CD4-positive, alpha-beta T cell (primary cell): ENCODE measurements at regions of chr14 and their contacts with region 1.

Region 1: GRCh38 chr14:90331497-90332435 is at the start of gene NRDE2:
- DNase-seq: peak; percentile 81 to 99 (median 93)
- ATAC-seq: peak; percentile 95
- H3K4me3 ChIP-seq: peak within 1 kb of the TSS; percentile 83
- H3K4me3 Mint-ChIP-seq: peak within 1 kb of the TSS; percentile 93
- H3K27ac ChIP-seq: peak within 1 kb of the TSS; percentile 60 to 72
- H3K27ac Mint-ChIP-seq: peak within 1 kb of the TSS; percentile 93
- H3K4me1 ChIP-seq: peaks cover 13% of the 10 kb centered on the region
- H3K4me1 Mint-ChIP-seq: peaks cover 40% of the 10 kb centered on the region
- H3K27me3 ChIP-seq: no peaks in the 10 kb centered on the region
- H3K27me3 Mint-ChIP-seq: peaks cover 11% of the 10 kb centered on the region
- CTCF ChIP-seq: no peak
- total RNA-seq, gene NRDE2: 17.5 to 17.9 TPM

Region 2: DNA sequence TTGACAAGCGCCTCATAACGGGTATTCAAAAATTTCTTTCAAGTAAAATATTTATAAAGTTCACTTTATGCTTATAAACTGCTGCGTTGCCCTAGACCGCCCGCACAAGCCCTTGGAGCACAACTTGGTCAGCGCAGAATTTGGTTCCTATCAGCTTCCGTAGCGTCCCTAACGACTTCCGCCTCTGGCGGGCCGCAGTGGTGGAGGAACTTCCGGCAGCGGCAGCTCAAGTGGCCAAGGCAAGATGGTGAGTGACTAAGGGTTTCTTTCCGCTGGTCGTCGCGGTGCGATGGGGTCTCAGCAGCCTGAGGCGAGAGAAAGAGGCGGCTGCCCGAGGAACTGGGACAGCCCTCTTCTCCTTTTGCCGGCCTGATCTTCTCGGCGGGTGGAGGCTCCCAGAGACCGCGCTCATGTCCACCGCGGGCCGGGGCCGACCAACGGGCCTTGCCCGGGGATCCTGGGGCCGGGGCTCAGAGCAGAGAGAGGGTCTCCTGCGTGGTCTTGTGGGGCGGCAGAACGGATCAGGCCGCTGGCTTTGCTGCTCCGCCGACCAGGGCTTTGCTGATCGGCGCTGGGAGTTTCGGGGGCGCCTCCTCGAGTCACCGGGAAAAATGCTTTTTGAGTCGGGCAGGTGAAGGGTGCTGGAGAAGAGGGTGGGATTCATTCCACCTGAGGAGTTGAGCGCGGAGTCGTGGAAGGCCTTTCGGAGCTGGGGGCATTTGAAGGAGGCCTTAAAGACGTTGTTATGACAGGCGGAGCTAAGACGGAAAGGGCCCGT is 75.2 kb before region 1 on chr14 and contains the start of gene PSMC1:
- CTCF ChIA-PET with region 1: no interaction called
- POLR2A ChIA-PET with region 1: no interaction called
- intact Hi-C with region 1: loop called in 1 of 2 experiments (anchors 2 kb)
- DNase-seq: peak; percentile 79 to 93 (median 83)
- ATAC-seq: peak; percentile 94
- H3K4me3 ChIP-seq: peak within 1 kb of the TSS; percentile 79
- H3K4me3 Mint-ChIP-seq: peak within 1 kb of the TSS; percentile 99
- H3K27ac ChIP-seq: peak within 1 kb of the TSS; percentile 39 to 79
- H3K27ac Mint-ChIP-seq: peak within 1 kb of the TSS; percentile 91
- H3K4me1 ChIP-seq: peaks cover 12% of the 10 kb centered on the region
- H3K4me1 Mint-ChIP-seq: peaks cover 34% of the 10 kb centered on the region
- H3K27me3 ChIP-seq: peaks cover 0 to 4% of the 10 kb centered on the region in 2 experiments
- H3K27me3 Mint-ChIP-seq: peaks cover 16% of the 10 kb centered on the region
- CTCF ChIP-seq: no peak
- total RNA-seq, gene PSMC1: 75.8 to 80.3 TPM

Region 3: DNA sequence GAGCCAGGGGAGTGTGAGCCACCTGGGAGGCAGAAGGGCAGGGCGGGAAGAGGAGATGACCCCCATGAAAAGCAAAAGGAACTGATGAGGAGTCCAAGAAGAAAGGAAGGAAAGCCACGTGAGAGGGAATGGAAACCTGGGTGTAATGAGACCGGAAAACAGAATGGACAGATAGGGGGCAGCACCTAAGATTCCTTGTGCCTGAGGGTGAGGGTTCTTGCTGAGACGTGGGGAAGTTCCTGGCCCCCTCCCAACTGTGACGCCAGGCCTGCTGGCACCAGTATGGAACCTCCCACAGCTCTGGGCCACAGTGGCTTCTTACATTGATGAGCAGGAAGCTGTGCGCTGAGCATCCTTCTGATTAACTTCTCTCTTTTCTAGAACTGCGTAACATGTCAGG is 453.7 kb after region 1 on chr14:
- CTCF ChIA-PET with region 1: no interaction called
- POLR2A ChIA-PET with region 1: no interaction called
- intact Hi-C with region 1: no loop called
- DNase-seq: peak in 2 of 14 experiments; percentile 41 to 51
- ATAC-seq: no peak
- H3K4me3 ChIP-seq: no peak overlapping the region
- H3K4me3 Mint-ChIP-seq: no peak overlapping the region
- H3K27ac ChIP-seq: no peak overlapping the region
- H3K27ac Mint-ChIP-seq: no peak overlapping the region
- H3K4me1 ChIP-seq: no peaks in the 10 kb centered on the region
- H3K4me1 Mint-ChIP-seq: no peaks in the 10 kb centered on the region
- H3K27me3 ChIP-seq: no peaks in the 10 kb centered on the region
- H3K27me3 Mint-ChIP-seq: no peaks in the 10 kb centered on the region
- CTCF ChIP-seq: no peak